ENCODE measurements at regions of chr6 and their contacts with region 1.

Region 1: GRCh38 chr6:47780510-47781356 is 1.1 kb upstream of the OPN5 start:
- DNase-seq: peak in 1 of 2 donors; percentile 35
- ATAC-seq: peak; percentile 77
- H3K4me3 ChIP-seq: no peak overlapping the region
- H3K27ac ChIP-seq: no peak overlapping the region
- H3K4me1 ChIP-seq: no peaks in the 10 kb centered on the region
- H3K27me3 ChIP-seq: peaks cover 0 to 1% of the 10 kb centered on the region in 2 donors

Region 2: DNA sequence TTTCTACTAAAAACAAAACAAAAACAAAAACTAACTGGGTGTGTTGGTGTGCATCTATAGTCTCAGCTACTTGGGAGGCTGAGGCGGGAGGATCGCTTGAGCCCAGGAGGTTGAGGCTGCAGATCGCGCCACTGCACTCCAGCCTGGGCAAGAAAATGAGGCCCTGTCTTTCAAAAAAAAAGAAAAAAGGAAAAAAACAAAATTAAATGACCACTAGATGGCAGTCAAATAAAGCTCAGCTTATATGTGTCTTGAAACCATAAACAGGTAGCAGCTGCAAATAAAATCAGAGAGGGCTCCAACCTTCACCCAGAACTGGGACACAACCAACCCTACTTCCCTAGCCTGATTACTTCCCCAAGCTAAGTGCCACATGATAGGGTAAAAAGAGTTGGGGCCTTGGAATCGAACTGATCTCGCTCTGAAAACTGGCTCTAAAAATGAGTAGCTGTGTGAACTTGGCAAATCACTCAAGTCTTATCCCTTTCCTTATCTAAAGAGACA is 149.4 kb before region 1 on chr6:
- intact Hi-C with region 1: loop called (anchors 2 kb)
- DNase-seq: no peak
- ATAC-seq: peak; percentile 60
- H3K4me3 ChIP-seq: no peak overlapping the region
- H3K27ac ChIP-seq: no peak overlapping the region
- H3K4me1 ChIP-seq: peaks cover 0 to 1% of the 10 kb centered on the region in 2 donors
- H3K27me3 ChIP-seq: no peaks in the 10 kb centered on the region

Region 3: GRCh38 chr6:47655719-47656595 is 124.8 kb before region 1 on chr6:
- intact Hi-C with region 1: no loop called
- DNase-seq: no peak
- ATAC-seq: no peak
- H3K4me3 ChIP-seq: no peak overlapping the region
- H3K27ac ChIP-seq: no peak overlapping the region
- H3K4me1 ChIP-seq: no peaks in the 10 kb centered on the region
- H3K27me3 ChIP-seq: peaks cover 0 to 1% of the 10 kb centered on the region in 2 donors

Region 4: GRCh38 chr6:47792216-47792733 is 11.5 kb after region 1 on chr6:
- intact Hi-C with region 1: no loop called
- DNase-seq: no peak
- ATAC-seq: no peak
- H3K4me3 ChIP-seq: no peak overlapping the region
- H3K27ac ChIP-seq: no peak overlapping the region
- H3K4me1 ChIP-seq: no peaks in the 10 kb centered on the region
- H3K27me3 ChIP-seq: no peaks in the 10 kb centered on the region

Region 5: GRCh38 chr6:47822856-47823554 is 42.3 kb after region 1 on chr6:
- intact Hi-C with region 1: no loop called
- DNase-seq: no peak
- ATAC-seq: no peak
- H3K4me3 ChIP-seq: no peak overlapping the region
- H3K27ac ChIP-seq: no peak overlapping the region
- H3K4me1 ChIP-seq: no peaks in the 10 kb centered on the region
- H3K27me3 ChIP-seq: peaks cover 0 to 4% of the 10 kb centered on the region in 2 donors

Region 6: GRCh38 chr6:48401016-48401415 is 620.3 kb after region 1 on chr6:
- intact Hi-C with region 1: no loop called
- DNase-seq: no peak
- ATAC-seq: no peak
- H3K4me3 ChIP-seq: no peak overlapping the region
- H3K27ac ChIP-seq: no peak overlapping the region
- H3K4me1 ChIP-seq: no peaks in the 10 kb centered on the region
- H3K27me3 ChIP-seq: no peaks in the 10 kb centered on the region